BJ (cell line): ENCODE measurements at regions of chr5 and their contacts with region 1.

Region 1: DNA sequence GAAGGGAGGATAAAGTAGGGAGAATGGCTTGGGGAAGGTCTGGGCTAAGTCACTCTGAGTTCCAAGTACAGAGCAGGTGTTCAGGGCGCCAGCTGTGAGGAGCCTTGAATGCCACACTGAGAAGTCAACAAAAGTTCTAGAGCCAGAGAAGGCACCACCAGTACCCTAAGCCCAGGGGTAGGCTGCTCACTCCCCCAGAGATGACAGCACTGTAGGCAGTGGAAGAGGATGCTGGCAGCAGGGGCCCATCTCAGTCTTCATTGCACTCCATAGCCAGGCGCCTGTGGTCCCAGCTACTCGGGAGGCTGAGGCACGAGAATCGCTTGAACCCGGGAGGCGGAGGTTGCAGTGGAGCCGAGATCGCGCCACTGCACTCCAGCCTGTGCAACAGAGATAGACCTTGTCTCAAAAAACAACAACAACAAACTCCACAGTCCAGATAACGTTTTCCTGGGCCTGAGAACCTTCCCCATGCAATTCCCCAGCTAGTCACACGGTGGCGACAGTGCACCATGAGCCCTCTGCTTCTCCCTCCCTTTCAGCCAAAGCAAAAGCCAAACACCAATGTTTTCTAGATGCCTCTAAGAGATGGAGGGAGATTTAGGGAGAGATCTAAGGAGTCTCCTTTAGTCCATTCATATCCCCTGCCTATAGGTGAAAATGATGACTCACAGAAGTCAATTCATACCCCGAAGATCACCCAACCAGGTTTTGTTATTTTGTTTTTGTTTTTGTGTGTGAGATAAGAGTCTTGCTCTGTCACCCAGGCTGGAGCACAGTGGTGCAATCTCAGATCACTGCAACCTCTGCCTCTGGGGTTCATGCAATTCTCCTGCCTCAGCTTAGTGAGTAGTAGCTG is 19.8 kb upstream of the NSD1 start:
- DNase-seq: no peak
- H3K4me3 ChIP-seq: no peak overlapping the region
- H3K27me3 ChIP-seq: no peaks in the 10 kb centered on the region
- CTCF ChIP-seq: peak; percentile 99

Region 2: DNA sequence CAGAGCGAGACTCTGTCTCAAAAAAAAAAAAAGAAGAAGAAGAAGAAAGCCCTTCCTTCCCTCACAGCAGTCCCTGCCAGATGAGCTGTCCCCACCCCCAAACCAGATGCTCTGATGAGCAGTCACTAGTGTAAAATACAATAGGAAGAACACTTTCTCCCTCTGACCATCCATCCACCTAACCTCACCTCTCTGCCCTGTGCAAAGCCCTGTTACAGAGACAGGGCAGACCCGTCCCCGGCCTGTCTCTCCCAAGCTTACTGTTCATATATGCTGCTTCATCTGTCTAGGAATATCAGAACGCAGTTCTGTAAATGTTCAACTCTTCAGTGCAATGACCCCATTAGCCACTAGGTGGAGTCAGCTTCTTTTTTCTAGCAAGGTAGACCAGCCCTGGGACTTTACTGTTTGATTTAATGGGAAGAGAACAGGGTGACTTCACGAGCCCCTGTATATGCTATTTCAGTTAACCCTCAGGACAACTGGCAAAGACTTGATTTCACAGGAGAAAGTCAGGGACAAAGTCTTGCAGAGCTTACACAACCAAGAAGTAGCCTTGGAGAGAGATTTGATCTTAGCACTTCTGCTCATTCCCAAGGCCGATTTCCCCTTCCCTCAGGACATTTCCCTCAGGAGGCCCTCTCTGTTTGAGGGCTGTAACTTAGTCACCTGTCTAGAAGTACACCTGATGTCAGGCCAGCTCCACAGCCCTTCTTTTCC is 42.0 kb before region 1 on chr5:
- CTCF ChIA-PET with region 1: interaction called, 105 read pairs
- POLR2A ChIA-PET with region 1: no interaction called
- DNase-seq: peak; percentile 49
- H3K4me3 ChIP-seq: peak overlapping the region; percentile 17; the same call in 1 of the 2 replicates
- H3K27me3 ChIP-seq: no peaks in the 10 kb centered on the region
- CTCF ChIP-seq: peak; percentile 91

Region 3: DNA sequence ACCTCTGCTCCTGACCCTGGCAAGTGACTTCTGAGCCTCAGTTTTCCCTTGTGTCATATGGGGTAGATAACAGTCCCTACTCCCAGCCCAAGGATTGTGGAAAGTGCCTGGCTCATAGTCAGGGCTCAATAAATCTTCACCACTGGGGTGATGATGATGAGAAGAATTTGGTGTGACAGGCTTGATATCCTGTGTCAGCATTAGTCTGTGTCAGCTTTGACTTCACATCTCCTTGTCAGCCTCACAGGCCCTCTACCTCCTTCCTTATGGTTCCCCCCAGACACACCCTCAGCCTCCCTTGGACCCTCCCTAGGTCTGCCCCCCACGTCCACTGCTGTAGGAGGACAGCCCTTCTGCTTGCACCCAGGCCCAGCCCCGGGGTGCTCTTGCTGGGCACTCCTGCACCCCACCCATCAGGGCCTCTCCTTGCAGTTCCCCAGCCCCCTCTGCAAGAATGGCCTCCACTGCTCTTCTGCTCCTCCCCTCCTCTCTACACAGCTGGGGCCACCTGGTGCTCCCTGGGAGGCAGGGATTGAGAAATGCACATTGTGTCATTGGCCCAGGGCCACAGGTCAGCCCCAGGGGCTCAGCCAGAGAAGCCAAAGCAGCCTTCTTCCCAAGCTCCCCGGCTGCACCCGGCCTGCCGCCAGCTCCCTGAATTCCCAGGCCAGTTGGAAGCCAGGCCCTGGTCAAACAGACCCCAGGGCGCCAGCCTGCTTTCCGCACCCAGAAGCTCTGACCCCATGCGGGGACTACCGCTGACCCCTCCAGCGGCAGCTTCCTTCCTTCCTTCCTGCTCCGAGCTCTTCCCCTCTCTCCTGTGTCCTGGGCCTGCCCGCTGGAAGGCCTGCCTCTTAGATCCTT is 19.3 kb before region 1 on chr5:
- CTCF ChIA-PET with region 1: interaction called, 33 read pairs
- POLR2A ChIA-PET with region 1: no interaction called
- DNase-seq: no peak
- H3K4me3 ChIP-seq: no peak overlapping the region
- H3K27me3 ChIP-seq: 0 out of 2 replicates have a peak, but pooled peaks cover 2% of the 10 kb centered on the region
- CTCF ChIP-seq: no peak

Region 4: GRCh38 chr5:177253252-177253651 is 139.5 kb after region 1 on chr5:
- CTCF ChIA-PET with region 1: interaction called, 15 read pairs
- POLR2A ChIA-PET with region 1: no interaction called
- DNase-seq: no peak
- H3K4me3 ChIP-seq: no peak overlapping the region
- H3K27me3 ChIP-seq: no peaks in the 10 kb centered on the region
- CTCF ChIP-seq: no peak

Region 5: GRCh38 chr5:177303121-177303924 is 189.5 kb after region 1 on chr5 and contains the starts of genes PRELID1 and RAB24:
- CTCF ChIA-PET with region 1: interaction called, 84 read pairs
- POLR2A ChIA-PET with region 1: no interaction called
- DNase-seq: no peak
- H3K4me3 ChIP-seq: peak within 1 kb of the TSS; percentile 71
- H3K27me3 ChIP-seq: no peaks in the 10 kb centered on the region
- CTCF ChIP-seq: peak; percentile 44
- polyA plus RNA-seq, gene PRELID1: 182 and 245 TPM in 2 replicates
- polyA plus RNA-seq, gene RAB24: 39.7 and 54.7 TPM in 2 replicates

Region 6: DNA sequence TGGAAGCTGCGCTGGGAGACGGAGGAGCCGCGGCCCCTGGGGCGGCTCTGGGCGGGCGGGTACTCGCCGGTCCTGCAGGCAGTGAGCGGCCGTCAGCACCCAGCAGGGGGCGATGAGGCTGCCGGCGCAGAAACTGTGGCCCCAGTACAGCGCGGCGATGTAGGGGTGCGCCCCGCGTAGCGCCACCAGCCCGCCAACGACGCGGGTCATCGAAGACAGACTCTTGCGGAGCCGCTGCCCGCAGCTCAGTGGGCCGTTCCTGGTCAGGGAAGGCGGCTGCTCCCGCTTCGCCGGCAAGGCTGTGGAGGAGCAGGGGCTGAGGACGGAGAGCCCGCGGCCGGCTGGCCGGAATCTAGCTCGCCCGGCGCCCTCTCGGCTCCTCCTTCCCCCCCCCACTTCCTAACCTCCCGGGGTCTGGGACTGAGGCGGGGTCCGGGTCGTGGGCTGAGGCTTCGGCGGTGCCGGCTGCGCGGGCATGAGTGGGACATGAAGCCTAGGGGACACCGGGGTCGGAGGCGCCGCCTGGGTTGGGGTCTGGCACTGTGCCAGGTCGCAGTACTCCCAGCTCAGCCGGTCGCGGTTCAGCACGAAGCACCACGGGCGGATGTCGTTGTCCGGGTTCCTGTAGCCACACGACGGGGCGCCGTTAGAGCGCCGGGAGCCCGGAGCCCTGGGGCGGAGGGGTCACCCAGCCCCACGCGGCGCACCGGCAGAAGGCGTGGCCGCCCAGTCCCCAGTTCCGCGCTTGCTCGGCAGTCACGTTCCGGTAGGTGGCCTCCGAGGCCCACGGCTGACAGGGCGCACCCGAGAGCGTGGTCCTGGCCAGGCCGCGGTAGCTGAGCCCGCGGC is 290.2 kb after region 1 on chr5:
- CTCF ChIA-PET with region 1: interaction called, 22 read pairs
- POLR2A ChIA-PET with region 1: no interaction called
- DNase-seq: no peak
- H3K4me3 ChIP-seq: peak overlapping the region; percentile 49
- H3K27me3 ChIP-seq: peaks cover 32% of the 10 kb centered on the region
- CTCF ChIP-seq: peak; percentile 78